Heart right ventricle (tissue), 16 donors: ENCODE measurements at regions of chr13 and their contacts with region 1.

Region 1: DNA sequence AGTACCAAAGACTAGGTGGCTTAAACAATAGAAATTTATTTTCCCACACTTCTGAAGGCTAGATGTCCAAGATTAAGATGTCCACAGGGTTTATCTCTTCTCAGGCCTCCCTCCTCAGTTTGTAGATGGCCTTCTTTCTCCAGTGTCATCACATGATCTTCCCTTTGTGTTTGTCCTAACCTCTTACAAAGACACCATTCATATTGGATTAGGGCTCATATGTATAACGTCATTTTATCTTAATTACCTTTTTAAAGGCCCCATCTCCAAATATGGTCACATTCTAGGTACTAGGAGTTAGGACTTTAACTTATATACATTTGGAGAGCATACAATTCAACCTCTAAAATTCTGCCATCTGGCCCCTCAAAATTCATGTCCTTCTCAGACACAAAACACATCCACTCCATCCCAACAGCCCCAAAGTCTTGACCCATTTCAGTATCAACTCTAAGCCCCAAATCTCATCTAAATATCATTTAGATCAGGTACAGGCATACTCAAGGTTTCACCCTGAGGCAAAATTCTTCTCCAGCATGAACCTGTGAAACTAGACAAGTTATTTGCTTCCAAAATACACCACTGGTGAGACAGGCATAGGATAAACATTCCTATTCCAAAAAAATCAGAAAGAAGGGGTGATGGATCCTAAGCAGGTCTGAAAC is 34.2 kb downstream of the N4BP2L2 start:
- DNase-seq: no peak
- ATAC-seq: no peak
- H3K4me3 ChIP-seq: no peak overlapping the region
- H3K27ac ChIP-seq: no peak overlapping the region
- H3K4me1 ChIP-seq: no peaks in the 10 kb centered on the region
- H3K27me3 ChIP-seq: no peaks in the 10 kb centered on the region
- CTCF ChIP-seq: no peak

Region 2: DNA sequence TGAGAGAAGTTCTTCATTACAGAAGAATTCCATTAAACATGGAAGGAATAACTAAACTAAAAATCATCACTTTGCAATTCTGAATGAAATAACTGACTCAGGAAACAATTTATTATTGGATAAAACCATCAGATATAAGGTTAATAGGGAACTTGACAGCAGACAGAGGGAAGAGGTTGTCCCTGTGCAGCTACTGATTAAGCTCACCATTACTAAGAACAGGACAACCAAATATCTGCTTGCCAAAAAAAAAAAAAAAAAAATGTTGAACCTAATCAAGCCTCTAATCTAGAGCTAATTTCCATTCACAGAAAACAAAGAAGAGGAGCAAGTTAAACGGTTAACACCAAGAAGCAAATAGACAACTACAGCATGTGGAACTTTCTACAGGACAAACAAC is 21.4 kb after region 1 on chr13:
- intact Hi-C with region 1: loop called in 1 of 10 experiments (anchors 1 kb)
- DNase-seq: no peak
- ATAC-seq: no peak
- H3K4me3 ChIP-seq: no peak overlapping the region
- H3K27ac ChIP-seq: no peak overlapping the region
- H3K4me1 ChIP-seq: peaks cover 0 to 55% (median 47%) of the 10 kb centered on the region in 9 donors
- H3K27me3 ChIP-seq: no peaks in the 10 kb centered on the region
- CTCF ChIP-seq: no peak

Region 3: DNA sequence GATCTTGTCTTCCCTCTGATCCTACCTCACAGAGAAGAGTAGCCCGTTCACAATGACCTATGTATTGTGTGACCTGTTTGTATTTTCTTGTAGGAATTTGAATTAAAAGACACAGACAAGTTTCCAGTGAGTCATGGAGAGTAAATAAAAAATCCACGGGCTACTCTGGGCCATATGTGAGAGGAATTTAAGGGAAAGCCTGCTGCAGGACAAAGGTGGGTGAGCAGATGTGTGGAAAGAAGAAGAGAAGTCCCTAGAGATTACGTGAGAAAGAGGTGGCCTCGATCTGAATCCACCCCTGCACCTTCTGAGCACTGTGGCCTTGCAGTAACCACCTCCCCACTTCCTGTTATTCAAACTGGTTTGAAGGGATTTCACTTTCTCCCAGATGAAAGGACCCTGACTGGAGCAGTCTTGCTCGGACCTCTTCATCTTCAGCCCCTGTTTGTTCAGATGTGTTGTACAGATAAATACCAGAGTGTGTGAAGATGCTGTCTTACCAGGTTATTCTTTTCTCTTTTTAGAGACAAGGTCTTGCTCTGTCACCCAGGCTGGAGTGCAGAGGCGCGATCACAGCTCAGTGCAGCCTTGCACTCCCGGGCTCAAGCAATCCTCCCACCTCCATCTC is 287.3 kb after region 1 on chr13:
- intact Hi-C with region 1: no loop called
- DNase-seq: no peak
- ATAC-seq: no peak
- H3K4me3 ChIP-seq: no peak overlapping the region
- H3K27ac ChIP-seq: no peak overlapping the region
- H3K4me1 ChIP-seq: peaks cover 0 to 4% (median 0%) of the 10 kb centered on the region in 9 donors
- H3K27me3 ChIP-seq: no peaks in the 10 kb centered on the region
- CTCF ChIP-seq: no peak